Transverse colon (tissue), 4 donors: ENCODE measurements at regions of chr3 and their contacts with region 1.

Region 1: DNA sequence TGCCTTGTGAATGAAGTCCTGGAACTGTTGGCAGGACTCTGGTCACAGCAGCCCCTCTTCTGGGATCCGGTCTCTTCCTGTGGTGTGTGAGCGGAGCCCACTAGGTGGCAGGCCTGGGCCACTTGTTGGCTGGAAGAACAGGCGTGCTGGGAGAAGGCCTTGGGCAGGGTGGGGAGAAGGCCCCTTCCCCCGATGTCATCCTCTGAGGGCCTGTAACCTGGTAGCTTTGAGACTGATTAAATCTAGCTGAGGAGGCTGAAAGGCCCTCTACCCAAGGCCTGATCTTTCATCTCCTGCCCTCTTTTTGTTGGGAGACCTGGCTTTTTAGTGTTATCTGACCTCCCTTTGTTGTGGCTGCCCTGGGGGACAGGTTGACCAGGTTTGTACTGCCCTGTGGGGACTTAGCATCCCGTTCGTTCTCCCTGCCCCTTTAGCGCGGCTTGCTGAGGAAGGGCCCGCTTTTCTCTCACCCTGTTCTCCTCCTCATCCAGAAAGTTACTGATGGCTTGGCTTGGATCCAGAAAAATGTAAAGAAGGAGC is 48.3 kb downstream of the CHCHD6 start:
- DNase-seq: peak; percentile 74
- H3K4me3 ChIP-seq: no peak overlapping the region
- H3K27ac ChIP-seq: no peak overlapping the region
- H3K4me1 ChIP-seq: no peaks in the 10 kb centered on the region
- H3K27me3 ChIP-seq: no peaks in the 10 kb centered on the region
- CTCF ChIP-seq: peak; percentile 80 to 88 (median 82)
- EP300 ChIP-seq: no peak
- POLR2A ChIP-seq: no peak

Region 2: DNA sequence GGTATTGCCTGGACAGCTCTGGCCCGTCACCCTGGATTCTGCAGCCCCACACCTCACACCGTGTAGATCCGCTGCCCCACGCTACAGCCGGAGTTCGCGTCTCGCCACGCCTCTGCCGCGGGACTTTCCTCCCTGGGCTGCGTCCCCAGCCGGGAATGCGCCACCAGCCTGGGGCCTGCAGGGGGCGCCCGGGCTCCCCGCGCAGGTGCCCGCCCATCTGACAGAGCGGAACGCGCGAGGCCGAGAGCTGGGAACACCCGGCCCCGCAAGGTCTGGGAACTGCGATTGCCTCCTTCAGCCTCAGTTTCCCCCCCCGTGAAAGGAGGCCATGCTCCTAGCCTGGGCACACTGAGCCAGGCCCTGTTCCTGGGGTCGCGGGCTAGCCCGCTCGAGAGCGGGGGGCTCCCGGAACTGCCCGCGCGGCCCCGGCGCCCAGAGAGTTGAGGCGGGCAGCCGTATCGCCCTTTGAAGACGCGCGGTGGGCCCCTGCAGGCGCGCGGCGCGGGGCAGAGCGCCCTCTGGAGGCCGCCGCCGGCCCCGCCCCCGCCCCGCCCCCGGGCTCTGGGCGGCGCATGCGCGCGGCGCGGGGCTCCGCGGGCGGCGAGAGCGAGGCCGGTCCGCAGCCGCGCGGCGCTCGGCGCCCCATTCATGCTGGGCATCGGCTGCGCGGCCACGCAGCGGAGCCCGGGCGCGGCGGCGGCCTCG is 230.2 kb after region 1 on chr3 and contains the start of gene PLXNA1:
- in situ Hi-C with region 1: loop called in 2 of 4 experiments (anchors 5 to 10 kb)
- intact Hi-C with region 1: loop called (anchors 10 kb)
- DNase-seq: peak; percentile 84
- H3K4me3 ChIP-seq: peak within 1 kb of the TSS; percentile 62 to 94 (median 74)
- H3K27ac ChIP-seq: peak within 1 kb of the TSS; percentile 84 to 93 (median 88)
- H3K4me1 ChIP-seq: peaks cover 10 to 17% (median 12%) of the 10 kb centered on the region in 4 donors
- H3K27me3 ChIP-seq: peaks cover 6% of the 10 kb centered on the region
- CTCF ChIP-seq: peak; percentile 95 to 98 (median 96)
- EP300 ChIP-seq: no peak
- POLR2A ChIP-seq: no peak
- total RNA-seq, gene PLXNA1: 20.8 to 56.7 (median 27.7) TPM

Region 3: DNA sequence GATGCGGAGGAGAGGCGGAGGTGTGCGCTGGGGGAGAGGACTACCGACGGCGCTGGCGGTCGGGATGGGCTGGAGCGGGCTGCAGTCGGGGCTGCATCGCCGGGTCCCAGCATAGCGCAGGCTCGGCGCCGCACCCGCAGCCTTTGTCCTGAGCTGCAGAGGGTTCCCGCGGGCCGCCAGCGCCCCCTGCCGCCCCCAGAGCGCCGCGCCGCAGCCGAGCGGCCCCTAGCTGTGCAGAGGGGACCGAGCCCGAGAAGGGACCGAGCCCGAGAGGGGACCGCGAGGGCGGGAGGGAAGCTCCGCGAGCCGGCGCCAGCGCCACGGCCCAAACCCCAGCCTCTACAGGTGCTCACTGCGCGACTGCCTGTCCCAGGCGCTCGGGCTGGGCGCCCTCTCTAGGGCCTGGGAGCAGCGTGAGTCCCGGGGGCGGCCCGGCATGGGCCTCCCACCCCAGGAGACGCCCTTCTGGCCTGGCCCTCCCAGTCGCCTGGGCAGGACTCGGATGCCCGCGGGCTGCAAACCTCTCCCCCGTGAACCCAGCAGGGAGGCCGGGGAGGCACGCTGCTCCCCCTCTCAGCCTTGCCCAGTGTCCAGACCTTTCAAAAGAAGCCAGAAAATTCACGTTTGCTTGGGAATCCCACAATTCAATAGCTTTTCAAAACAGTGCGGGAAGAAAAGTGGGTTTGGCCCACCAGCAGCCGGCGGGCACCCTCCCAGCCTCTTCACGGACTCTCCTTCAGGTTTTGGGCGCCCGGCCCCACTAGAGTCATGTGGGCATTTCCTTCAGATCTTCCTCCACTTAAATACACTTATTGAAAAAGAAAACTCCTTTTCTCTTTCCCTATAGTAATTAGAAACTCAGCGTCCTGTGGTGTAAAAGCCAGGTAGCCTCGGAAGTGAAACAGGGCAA is 703.4 kb after region 1 on chr3:
- in situ Hi-C with region 1: loop called in 1 of 4 experiments (anchors 25 kb)
- intact Hi-C with region 1: loop called (anchors 10 kb)
- DNase-seq: peak; percentile 66
- H3K4me3 ChIP-seq: peak overlapping the region in 2 of 4 donors; percentile 10 to 33
- H3K27ac ChIP-seq: no peak overlapping the region
- H3K4me1 ChIP-seq: peaks cover 9 to 24% (median 23%) of the 10 kb centered on the region in 4 donors
- H3K27me3 ChIP-seq: peaks cover 64% of the 10 kb centered on the region
- CTCF ChIP-seq: peak; percentile 63 to 89 (median 87)
- EP300 ChIP-seq: no peak
- POLR2A ChIP-seq: no peak

Region 4: GRCh38 chr3:127544192-127544802 is 791.9 kb after region 1 on chr3:
- in situ Hi-C with region 1: no loop called
- intact Hi-C with region 1: loop called (anchors 5 kb)
- DNase-seq: peak; percentile 82
- H3K4me3 ChIP-seq: no peak overlapping the region
- H3K27ac ChIP-seq: no peak overlapping the region
- H3K4me1 ChIP-seq: peaks cover 0 to 27% (median 16%) of the 10 kb centered on the region in 4 donors
- H3K27me3 ChIP-seq: no peaks in the 10 kb centered on the region
- CTCF ChIP-seq: peak; percentile 62 to 86 (median 81)
- EP300 ChIP-seq: no peak
- POLR2A ChIP-seq: no peak